ENCODE measurements at regions of chr20 and their contacts with region 1.

Region 1: DNA sequence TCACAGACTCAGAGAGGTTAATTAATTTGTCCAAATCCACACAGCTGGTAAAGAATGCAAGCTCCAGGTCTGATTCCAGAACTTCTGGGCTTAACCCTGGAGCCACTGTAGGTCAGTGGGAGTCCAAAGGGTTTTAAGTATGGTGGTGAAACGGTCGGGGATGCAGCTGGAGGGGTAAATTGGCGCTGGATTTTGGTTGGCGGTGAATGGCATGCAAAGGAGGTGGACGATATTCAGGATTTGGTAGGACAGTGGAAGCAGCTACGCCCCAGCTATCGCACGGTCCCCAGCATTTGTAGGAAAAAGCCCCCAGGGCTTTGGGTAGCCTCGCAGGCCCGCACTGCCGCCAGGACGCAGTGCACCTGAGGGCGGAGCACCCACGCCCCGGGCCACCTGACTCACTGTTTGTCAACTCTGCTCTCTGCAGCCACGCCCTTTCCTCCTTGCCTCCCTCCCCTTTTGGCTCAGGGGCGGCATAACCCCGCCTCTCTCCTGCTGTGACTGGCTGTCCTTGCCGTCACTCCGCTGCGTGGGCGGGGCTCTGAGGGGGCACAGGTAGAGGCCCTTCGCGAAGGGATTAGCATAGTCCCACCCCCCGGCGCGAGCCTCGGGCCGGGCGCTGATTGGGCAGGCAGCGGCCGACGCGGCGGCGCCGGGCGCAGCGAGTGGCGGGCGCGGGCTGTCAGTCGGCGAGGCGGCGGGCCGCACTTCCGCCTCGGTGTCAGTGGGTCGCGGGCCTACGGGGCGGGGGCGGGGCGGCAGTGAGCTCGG is at the start of gene OSBPL2:
- DNase-seq: peak; percentile 100
- ATAC-seq: peak; percentile 98
- H3K4me3 Mint-ChIP-seq: peak within 1 kb of the TSS; percentile 81
- H3K27ac Mint-ChIP-seq: peak within 1 kb of the TSS; percentile 89
- H3K4me1 Mint-ChIP-seq: peaks cover 34% of the 10 kb centered on the region
- H3K27me3 Mint-ChIP-seq: no peaks in the 10 kb centered on the region
- CTCF ChIP-seq: no peak
- total RNA-seq, gene OSBPL2: 40.3 and 43.0 TPM in 2 replicates

Region 2: DNA sequence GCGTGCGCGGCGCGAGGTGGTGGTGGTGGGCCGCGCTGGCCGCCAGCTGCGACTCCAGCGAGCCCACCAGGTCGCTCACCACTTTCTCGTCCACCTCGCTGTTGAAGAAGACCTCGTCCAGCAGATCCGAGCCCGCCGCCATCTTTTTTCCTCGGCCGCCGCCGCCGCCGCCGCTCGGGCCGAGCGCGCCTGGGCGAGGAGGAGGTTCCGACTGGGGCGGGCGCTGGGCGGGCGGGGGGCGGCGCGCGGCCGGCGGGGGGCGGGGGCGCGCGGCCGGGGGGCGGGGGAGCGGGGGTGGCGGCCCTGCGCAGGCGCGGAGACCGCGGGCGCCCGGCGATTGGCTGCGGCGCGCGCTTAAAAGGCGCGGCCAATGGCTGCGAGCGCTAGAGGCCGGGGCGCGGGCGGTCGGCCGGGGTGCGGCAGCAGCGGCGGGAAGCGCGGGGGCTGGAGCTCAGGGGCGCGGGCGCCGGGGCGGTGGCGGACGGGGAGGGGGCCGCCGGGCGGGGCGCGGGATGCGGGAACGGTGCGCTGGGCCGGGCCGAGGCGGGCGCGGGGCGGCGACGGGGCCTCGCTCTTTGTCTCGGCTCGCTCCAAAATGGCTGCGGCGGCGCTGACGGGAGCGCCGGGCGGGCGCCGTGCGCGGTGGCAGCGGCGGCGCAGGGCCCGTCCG is 172.2 kb before region 1 on chr20 and contains the start of gene TAF4:
- CTCF ChIA-PET with region 1: no interaction called
- POLR2A ChIA-PET with region 1: no interaction called
- intact Hi-C with region 1: loop called (anchors 1 kb)
- DNase-seq: peak; percentile 83
- ATAC-seq: peak; percentile 79
- H3K4me3 Mint-ChIP-seq: peak within 1 kb of the TSS; percentile 88
- H3K27ac Mint-ChIP-seq: peak within 1 kb of the TSS; percentile 89
- H3K4me1 Mint-ChIP-seq: peaks cover 49% of the 10 kb centered on the region
- H3K27me3 Mint-ChIP-seq: peaks cover 3% of the 10 kb centered on the region
- CTCF ChIP-seq: no peak
- total RNA-seq, gene TAF4: 24.9 and 26.9 TPM in 2 replicates

Region 3: GRCh38 chr20:62121776-62122631 is 116.0 kb before region 1 on chr20 and contains the start of gene LSM14B:
- CTCF ChIA-PET with region 1: no interaction called
- POLR2A ChIA-PET with region 1: no interaction called
- intact Hi-C with region 1: loop called (anchors 1 kb)
- DNase-seq: peak; percentile 95
- ATAC-seq: peak; percentile 87
- H3K4me3 Mint-ChIP-seq: peak within 1 kb of the TSS; percentile 88
- H3K27ac Mint-ChIP-seq: peak within 1 kb of the TSS; percentile 89
- H3K4me1 Mint-ChIP-seq: peaks cover 19% of the 10 kb centered on the region
- H3K27me3 Mint-ChIP-seq: no peaks in the 10 kb centered on the region
- CTCF ChIP-seq: no peak
- total RNA-seq, gene LSM14B: 35.4 and 36.4 TPM in 2 replicates

Region 4: GRCh38 chr20:62182613-62183425 is 55.2 kb before region 1 on chr20 and contains the start of gene MTG2:
- CTCF ChIA-PET with region 1: no interaction called
- POLR2A ChIA-PET with region 1: no interaction called
- intact Hi-C with region 1: loop called (anchors 1 kb)
- DNase-seq: peak; percentile 87
- ATAC-seq: peak; percentile 92
- H3K4me3 Mint-ChIP-seq: peak within 1 kb of the TSS; percentile 92
- H3K27ac Mint-ChIP-seq: peak within 1 kb of the TSS; percentile 92
- H3K4me1 Mint-ChIP-seq: peaks cover 43% of the 10 kb centered on the region
- H3K27me3 Mint-ChIP-seq: no peaks in the 10 kb centered on the region
- CTCF ChIP-seq: no peak
- total RNA-seq, gene MTG2: 40.8 and 46.8 TPM in 2 replicates

Region 5: GRCh38 chr20:62201173-62202082 is 36.6 kb before region 1 on chr20:
- CTCF ChIA-PET with region 1: no interaction called
- POLR2A ChIA-PET with region 1: interaction called, 3 read pairs
- intact Hi-C with region 1: loop called (anchors 5 kb)
- DNase-seq: no peak
- ATAC-seq: peak; percentile 83
- H3K4me3 Mint-ChIP-seq: peak overlapping the region; percentile 75
- H3K27ac Mint-ChIP-seq: peak overlapping the region; percentile 21
- H3K4me1 Mint-ChIP-seq: peaks cover 33% of the 10 kb centered on the region
- H3K27me3 Mint-ChIP-seq: no peaks in the 10 kb centered on the region
- CTCF ChIP-seq: no peak

Region 6: GRCh38 chr20:62219992-62220665 is 17.9 kb before region 1 on chr20 and contains the start of gene HRH3:
- CTCF ChIA-PET with region 1: no interaction called
- POLR2A ChIA-PET with region 1: no interaction called
- intact Hi-C with region 1: loop called (anchors 1 kb)
- DNase-seq: peak; percentile 54
- ATAC-seq: peak; percentile 85
- H3K4me3 Mint-ChIP-seq: peak within 1 kb of the TSS; percentile 46
- H3K27ac Mint-ChIP-seq: no peak within 1 kb of the TSS
- H3K4me1 Mint-ChIP-seq: peaks cover 1% of the 10 kb centered on the region
- H3K27me3 Mint-ChIP-seq: peaks cover 37% of the 10 kb centered on the region
- CTCF ChIP-seq: no peak
- total RNA-seq, gene HRH3: not detected in 2 replicates

Region 7: GRCh38 chr20:62642040-62642665 is 404.2 kb after region 1 on chr20 and contains the start of gene SLCO4A1:
- CTCF ChIA-PET with region 1: no interaction called
- POLR2A ChIA-PET with region 1: no interaction called
- intact Hi-C with region 1: loop called (anchors 5 kb)
- DNase-seq: peak; percentile 90
- ATAC-seq: peak; percentile 91
- H3K4me3 Mint-ChIP-seq: peak within 1 kb of the TSS; percentile 87
- H3K27ac Mint-ChIP-seq: peak within 1 kb of the TSS; percentile 72
- H3K4me1 Mint-ChIP-seq: peaks cover 41% of the 10 kb centered on the region
- H3K27me3 Mint-ChIP-seq: no peaks in the 10 kb centered on the region
- CTCF ChIP-seq: no peak
- total RNA-seq, gene SLCO4A1: 27.8 and 38.9 TPM in 2 replicates